Activated T-helper 2 cell treated with anti-CD3 and anti-CD28 coated beads, Interferon-gamma antibody, Interleukin-2, Interleukin-4, amounts not matched to agents 10 μg/mL and 5 μg/mL and 100 μg/mL, durations not matched to agents 14 hours and 24 hours and 36 hours (primary cell): ENCODE measurements at regions of chr12 and their contacts with region 1.

Region 1: DNA sequence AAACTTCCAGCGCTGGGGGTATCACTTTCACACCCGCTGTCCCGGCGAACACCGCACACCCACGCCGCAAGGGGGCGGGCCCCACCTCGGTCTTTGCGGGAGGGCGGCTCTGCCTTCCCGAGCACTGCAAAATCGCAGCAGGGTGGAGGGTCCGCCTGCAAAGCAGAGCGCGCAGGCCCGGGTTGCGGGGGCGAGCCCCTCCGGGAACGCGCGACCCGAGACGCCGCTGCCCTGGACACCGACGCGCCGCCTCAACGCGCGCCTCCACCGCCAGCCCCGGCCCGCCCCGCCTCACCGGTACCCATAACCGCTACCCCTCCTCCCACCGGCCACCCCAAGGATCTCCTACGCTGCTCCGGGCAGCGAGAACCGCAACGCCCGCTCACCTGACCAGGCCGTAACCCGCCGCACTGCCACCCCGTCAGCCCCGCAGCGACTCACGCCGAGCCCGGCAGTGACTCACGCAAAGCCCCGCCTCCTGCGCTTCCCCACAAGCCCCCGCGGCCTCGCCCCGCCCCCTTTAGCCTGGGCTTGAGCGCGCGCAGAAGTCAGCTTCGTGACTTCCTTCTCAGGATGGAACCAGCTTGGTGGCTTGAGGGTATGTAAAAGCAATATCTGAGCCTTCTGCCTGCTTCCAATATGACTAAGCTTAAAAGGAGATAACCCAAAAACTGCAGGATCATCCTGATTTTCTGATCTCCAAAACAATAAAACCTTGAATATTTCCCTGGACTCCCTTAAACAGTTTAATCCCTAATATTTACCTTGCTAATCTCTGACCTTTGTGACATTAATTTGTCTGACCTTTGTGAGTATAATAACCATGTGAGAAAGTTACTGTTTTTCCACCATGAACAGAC is at the start of gene RPAP3:
- DNase-seq: peak; percentile 96
- H3K4me3 Mint-ChIP-seq: peak within 1 kb of the TSS; percentile 96
- H3K27ac Mint-ChIP-seq: peak within 1 kb of the TSS; percentile 98
- H3K4me1 Mint-ChIP-seq: peaks cover 55% of the 10 kb centered on the region
- H3K27me3 Mint-ChIP-seq: no peaks in the 10 kb centered on the region
- total RNA-seq, gene RPAP3: 57.4 and 58.7 TPM in 2 replicates

Region 2: GRCh38 chr12:45990468-45991283 is 1715.1 kb before region 1 on chr12 and contains the start of gene SCAF11:
- intact Hi-C with region 1: loop called (anchors 2 kb)
- DNase-seq: peak; percentile 100
- H3K4me3 Mint-ChIP-seq: peak within 1 kb of the TSS; percentile 93
- H3K27ac Mint-ChIP-seq: peak within 1 kb of the TSS; percentile 98
- H3K4me1 Mint-ChIP-seq: peaks cover 38% of the 10 kb centered on the region
- H3K27me3 Mint-ChIP-seq: peaks cover 6% of the 10 kb centered on the region
- total RNA-seq, gene SCAF11: 125 and 128 TPM in 2 replicates

Region 3: GRCh38 chr12:47079468-47079980 is 626.3 kb before region 1 on chr12 and contains the starts of genes AMIGO2 and PCED1B:
- intact Hi-C with region 1: loop called (anchors 5 kb)
- DNase-seq: peak; percentile 57
- H3K4me3 Mint-ChIP-seq: peak within 1 kb of the TSS; percentile 97
- H3K27ac Mint-ChIP-seq: peak within 1 kb of the TSS; percentile 95
- H3K4me1 Mint-ChIP-seq: peaks cover 63% of the 10 kb centered on the region
- H3K27me3 Mint-ChIP-seq: no peaks in the 10 kb centered on the region
- total RNA-seq, gene AMIGO2: 10.7 and 11.1 TPM in 2 replicates
- total RNA-seq, gene PCED1B: 49.9 and 50.4 TPM in 2 replicates

Region 4: DNA sequence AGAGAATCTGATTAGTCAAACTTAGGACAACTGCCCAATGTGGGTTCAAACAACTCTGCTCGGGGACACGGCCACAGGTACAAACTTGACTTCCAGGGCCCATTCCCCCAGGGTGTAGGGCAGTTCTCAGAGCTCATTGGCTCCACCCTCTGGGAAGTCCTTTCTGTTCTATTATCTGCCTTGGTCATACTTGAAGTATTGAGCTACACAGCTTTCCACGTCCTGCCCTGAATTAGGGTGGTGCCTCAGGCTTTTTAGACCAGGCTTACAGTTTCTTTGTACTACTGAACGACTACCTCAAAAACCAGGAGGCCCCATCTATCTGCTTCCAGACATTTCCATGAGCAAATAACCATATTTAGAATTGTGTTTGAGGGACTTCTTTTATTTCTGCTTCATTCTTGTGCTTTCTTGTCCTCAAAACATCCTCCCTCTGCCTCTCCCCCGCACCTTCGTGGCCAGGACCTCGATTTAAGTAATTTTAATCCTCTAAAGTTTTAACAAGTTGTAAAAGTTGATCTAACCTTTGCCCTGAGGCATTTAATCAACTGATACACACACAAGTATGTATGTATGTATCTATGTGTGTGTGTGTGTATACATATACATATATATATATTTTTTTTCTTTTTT is 344.3 kb before region 1 on chr12:
- intact Hi-C with region 1: loop called (anchors 2 kb)
- DNase-seq: peak; percentile 46
- H3K4me3 Mint-ChIP-seq: peak overlapping the region; percentile 67
- H3K27ac Mint-ChIP-seq: peak overlapping the region; percentile 95
- H3K4me1 Mint-ChIP-seq: peaks cover 51% of the 10 kb centered on the region
- H3K27me3 Mint-ChIP-seq: no peaks in the 10 kb centered on the region

Region 5: GRCh38 chr12:47672068-47672467 is 33.7 kb before region 1 on chr12:
- intact Hi-C with region 1: no loop called
- DNase-seq: no peak
- H3K4me3 Mint-ChIP-seq: no peak overlapping the region
- H3K27ac Mint-ChIP-seq: no peak overlapping the region
- H3K4me1 Mint-ChIP-seq: peaks cover 10% of the 10 kb centered on the region
- H3K27me3 Mint-ChIP-seq: no peaks in the 10 kb centered on the region

Region 6: DNA sequence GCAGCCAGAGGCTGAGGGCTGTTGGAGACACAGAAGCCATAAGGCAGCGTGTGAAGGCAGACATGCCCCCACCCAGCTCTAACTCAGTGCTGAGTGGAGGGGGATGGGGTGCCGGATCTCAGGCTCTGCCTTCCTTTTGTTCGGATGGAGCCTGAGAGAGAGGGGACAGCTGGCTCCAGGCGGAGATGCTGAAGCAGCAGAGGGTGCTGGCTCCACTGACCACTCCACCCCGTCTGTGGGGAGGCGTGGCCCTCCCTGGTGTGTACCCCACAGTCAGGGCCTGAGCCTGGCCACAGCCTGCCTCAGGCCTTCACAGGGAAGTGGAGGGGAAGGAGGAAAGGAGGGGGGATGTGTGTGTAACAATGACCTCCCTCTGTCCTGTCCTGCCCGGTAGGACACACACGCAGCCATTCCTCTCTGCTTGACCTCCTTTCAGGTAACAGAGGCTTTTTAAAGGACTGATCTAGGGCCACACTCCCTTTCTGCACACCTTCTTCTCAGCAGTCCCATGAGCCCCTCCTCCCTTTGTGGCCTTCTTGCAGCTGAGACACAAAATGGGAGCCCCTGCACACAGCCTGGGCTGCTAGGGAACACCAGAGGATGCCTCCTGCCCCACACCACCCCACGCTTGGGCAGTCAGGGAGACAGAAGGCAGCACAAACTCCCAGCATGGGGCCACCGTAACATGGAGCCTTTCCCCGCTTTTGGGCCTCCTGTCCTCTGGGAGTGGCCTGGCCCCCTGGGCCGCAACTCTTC is 29.1 kb after region 1 on chr12:
- intact Hi-C with region 1: no loop called
- DNase-seq: no peak
- H3K4me3 Mint-ChIP-seq: no peak overlapping the region
- H3K27ac Mint-ChIP-seq: no peak overlapping the region
- H3K4me1 Mint-ChIP-seq: no peaks in the 10 kb centered on the region
- H3K27me3 Mint-ChIP-seq: no peaks in the 10 kb centered on the region

Region 7: GRCh38 chr12:47882781-47883546 is 177.2 kb after region 1 on chr12:
- intact Hi-C with region 1: loop called (anchors 5 kb)
- DNase-seq: no peak
- H3K4me3 Mint-ChIP-seq: peak overlapping the region; percentile 87
- H3K27ac Mint-ChIP-seq: peak overlapping the region; percentile 99
- H3K4me1 Mint-ChIP-seq: peaks cover 80% of the 10 kb centered on the region
- H3K27me3 Mint-ChIP-seq: no peaks in the 10 kb centered on the region

Region 8: GRCh38 chr12:48157018-48157888 is 451.5 kb after region 1 on chr12 and contains the start of gene ASB8:
- intact Hi-C with region 1: loop called (anchors 5 kb)
- DNase-seq: peak; percentile 99
- H3K4me3 Mint-ChIP-seq: peak within 1 kb of the TSS; percentile 86
- H3K27ac Mint-ChIP-seq: peak within 1 kb of the TSS; percentile 88
- H3K4me1 Mint-ChIP-seq: peaks cover 18% of the 10 kb centered on the region
- H3K27me3 Mint-ChIP-seq: peaks cover 2% of the 10 kb centered on the region
- total RNA-seq, gene ASB8: 32.5 and 33.1 TPM in 2 replicates